ENCODE measurements at regions of chr12 and their contacts with region 1.

Region 1: DNA sequence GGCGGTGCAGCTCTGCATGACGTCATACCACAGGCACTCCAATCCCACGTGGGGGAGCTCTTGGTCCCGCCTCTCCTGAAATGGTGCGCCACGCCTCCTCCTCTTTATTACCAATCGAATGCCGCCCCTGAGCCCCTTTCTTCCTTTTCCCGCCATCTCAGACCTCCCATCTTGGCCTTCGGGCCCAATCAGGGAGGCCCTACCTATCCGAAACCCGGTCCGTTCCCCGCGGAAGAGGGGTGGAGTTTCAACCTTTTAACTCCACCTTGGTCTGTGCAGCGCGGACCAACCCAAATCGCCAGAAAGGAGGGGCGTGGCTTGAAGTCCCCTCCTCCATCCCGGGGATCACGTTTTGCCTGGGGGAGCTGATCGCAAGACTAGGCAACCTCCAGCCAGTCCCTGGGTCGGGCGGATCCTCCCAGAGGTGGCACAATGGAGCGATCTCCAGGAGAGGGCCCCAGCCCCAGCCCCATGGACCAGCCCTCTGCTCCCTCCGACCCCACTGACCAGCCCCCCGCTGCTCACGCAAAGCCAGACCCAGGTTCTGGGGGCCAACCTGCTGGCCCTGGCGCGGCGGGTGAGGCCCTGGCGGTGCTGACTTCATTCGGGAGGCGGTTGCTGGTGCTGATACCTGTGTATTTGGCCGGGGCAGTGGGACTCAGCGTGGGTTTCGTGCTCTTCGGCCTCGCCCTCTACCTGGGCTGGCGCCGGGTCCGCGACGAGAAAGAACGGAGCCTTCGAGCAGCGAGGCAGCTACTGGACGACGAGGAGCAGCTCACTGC is at the start of gene ESYT1:
- DNase-seq: peak; percentile 99
- H3K4me3 ChIP-seq: peak within 1 kb of the TSS; percentile 90
- H3K27ac ChIP-seq: peak within 1 kb of the TSS; percentile 78
- H3K27me3 ChIP-seq: no peaks in the 10 kb centered on the region
- CTCF ChIP-seq: no peak
- polyA plus RNA-seq, gene ESYT1: 127 and 140 TPM in 2 replicates

Region 2: GRCh38 chr12:56158029-56158925 is 30.2 kb after region 1 on chr12 and contains the start of gene MYL6:
- CTCF ChIA-PET with region 1: no interaction called
- POLR2A ChIA-PET with region 1: interaction called, 28 read pairs
- DNase-seq: peak; percentile 95
- H3K4me3 ChIP-seq: peak within 1 kb of the TSS; percentile 99
- H3K27ac ChIP-seq: peak within 1 kb of the TSS; percentile 95
- H3K27me3 ChIP-seq: no peaks in the 10 kb centered on the region
- CTCF ChIP-seq: no peak
- polyA plus RNA-seq, gene MYL6: 5,661 and 5,957 TPM in 2 replicates

Measured in AG04450 (cell line).